CD8-positive, alpha-beta T cell (primary cell): ENCODE measurements at regions of chr13 and their contacts with region 1.

Region 1: DNA sequence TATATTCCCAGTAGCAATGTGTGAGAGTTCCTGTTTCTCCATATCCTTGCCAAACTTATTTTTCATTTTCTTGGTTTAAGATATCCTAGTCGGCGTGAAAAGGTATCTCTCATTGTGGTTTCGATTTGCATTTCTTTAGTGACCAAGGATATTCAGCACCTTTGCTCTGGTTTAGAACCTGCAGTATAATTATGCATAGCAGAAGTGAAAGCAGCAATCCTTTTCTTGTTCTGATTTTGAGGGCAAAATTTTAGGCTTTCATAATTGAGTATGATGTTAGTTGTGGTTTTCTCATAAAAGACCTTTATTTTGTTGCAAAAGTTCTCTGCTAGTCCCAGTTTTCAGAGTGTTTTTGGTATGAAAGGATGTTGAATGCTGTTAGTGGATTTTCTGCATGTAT is 491.0 kb downstream of the FGF9 start:
- DNase-seq: peak in 1 of 9 experiments; percentile 37
- ATAC-seq: no peak
- H3K4me3 ChIP-seq: peak overlapping the region in 1 of 2 experiments; percentile 1
- H3K4me3 Mint-ChIP-seq: peak overlapping the region; percentile 74
- H3K27ac ChIP-seq: no peak overlapping the region
- H3K27ac Mint-ChIP-seq: peak overlapping the region; percentile 32
- H3K4me1 ChIP-seq: peaks cover 16% of the 10 kb centered on the region
- H3K4me1 Mint-ChIP-seq: peaks cover 30% of the 10 kb centered on the region
- H3K27me3 ChIP-seq: no peaks in the 10 kb centered on the region
- H3K27me3 Mint-ChIP-seq: no peaks in the 10 kb centered on the region
- CTCF ChIP-seq: no peak

Region 2: DNA sequence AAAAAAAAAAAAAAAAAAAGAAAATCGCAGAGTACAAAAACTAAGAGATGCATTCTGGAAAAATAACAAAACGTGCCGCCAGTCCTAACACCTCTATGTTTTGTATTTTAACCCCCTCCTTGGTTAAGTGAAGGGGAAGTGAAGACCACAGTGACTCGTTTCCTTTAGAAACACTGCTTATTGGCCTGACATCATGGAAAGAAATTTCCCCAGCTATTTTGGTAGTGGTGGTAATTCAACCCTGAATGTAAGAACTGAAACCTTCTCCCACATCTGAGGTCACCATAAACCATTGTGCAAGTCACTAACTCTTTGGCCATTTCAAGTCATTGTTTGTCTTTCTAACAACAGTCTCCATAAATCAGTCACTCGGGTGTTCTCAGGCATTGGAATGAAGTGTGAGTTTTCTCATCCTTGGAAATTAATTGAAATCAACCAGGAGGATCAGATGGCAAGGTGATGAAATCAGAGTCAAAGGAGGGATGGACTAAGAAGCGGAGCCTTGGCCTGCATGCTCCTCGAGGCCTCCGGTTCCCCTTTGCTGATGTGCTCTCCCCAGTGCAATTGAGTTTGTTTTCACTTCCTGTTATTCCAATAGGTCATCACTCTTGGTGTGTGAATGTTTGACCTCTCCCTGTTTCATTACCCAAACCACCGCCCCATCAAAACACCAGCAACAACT is 47.1 kb before region 1 on chr13:
- CTCF ChIA-PET with region 1: no interaction called
- POLR2A ChIA-PET with region 1: no interaction called
- intact Hi-C with region 1: loop called (anchors 2 to 5 kb)
- DNase-seq: peak in 6 of 9 experiments; percentile 16 to 93 (median 46)
- ATAC-seq: peak; percentile 88
- H3K4me3 ChIP-seq: no peak overlapping the region
- H3K4me3 Mint-ChIP-seq: peak overlapping the region; percentile 4
- H3K27ac ChIP-seq: peak overlapping the region in 1 of 2 experiments; percentile 54
- H3K27ac Mint-ChIP-seq: peak overlapping the region; percentile 88
- H3K4me1 ChIP-seq: peaks cover 20% of the 10 kb centered on the region
- H3K4me1 Mint-ChIP-seq: peaks cover 36% of the 10 kb centered on the region
- H3K27me3 ChIP-seq: no peaks in the 10 kb centered on the region
- H3K27me3 Mint-ChIP-seq: no peaks in the 10 kb centered on the region
- CTCF ChIP-seq: no peak

Region 3: DNA sequence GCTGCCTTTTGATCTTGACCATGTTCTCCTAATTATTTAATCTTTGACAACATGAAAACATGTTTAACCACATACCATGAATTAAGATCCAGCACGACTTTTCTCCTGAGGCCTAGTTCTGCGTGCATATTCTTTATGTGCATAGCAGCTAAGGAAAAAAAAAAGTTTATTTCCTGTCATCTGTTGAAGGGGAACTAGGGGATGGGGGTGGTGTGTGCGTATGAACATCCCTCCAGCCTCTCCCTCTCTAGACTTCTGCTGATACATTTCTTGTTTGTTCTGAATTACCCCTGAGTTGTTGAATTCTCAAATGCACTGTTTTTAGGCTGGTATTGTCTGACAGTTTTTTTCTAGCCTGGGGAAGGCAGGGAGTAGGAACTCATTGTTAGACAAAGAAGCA is 52.3 kb after region 1 on chr13:
- CTCF ChIA-PET with region 1: no interaction called
- POLR2A ChIA-PET with region 1: no interaction called
- intact Hi-C with region 1: no loop called
- DNase-seq: peak in 2 of 9 experiments; percentile 6 to 35
- ATAC-seq: peak; percentile 38
- H3K4me3 ChIP-seq: no peak overlapping the region
- H3K4me3 Mint-ChIP-seq: no peak overlapping the region
- H3K27ac ChIP-seq: no peak overlapping the region
- H3K27ac Mint-ChIP-seq: no peak overlapping the region
- H3K4me1 ChIP-seq: peaks cover 8% of the 10 kb centered on the region
- H3K4me1 Mint-ChIP-seq: peaks cover 26% of the 10 kb centered on the region
- H3K27me3 ChIP-seq: no peaks in the 10 kb centered on the region
- H3K27me3 Mint-ChIP-seq: no peaks in the 10 kb centered on the region
- CTCF ChIP-seq: no peak